ENCODE measurements at regions of chr16 and their contacts with region 1.

Region 1: GRCh38 chr16:85086347-85087291 is 25.7 kb downstream of the CIBAR2 start:
- DNase-seq: peak; percentile 82
- CTCF ChIP-seq: peak; percentile 90

Region 2: GRCh38 chr16:85010931-85011845 is 75.4 kb before region 1 on chr16 and contains the start of gene ZDHHC7:
- CTCF ChIA-PET with region 1: interaction called, 16 read pairs
- POLR2A ChIA-PET with region 1: no interaction called
- DNase-seq: peak; percentile 96
- CTCF ChIP-seq: no peak

Region 3: DNA sequence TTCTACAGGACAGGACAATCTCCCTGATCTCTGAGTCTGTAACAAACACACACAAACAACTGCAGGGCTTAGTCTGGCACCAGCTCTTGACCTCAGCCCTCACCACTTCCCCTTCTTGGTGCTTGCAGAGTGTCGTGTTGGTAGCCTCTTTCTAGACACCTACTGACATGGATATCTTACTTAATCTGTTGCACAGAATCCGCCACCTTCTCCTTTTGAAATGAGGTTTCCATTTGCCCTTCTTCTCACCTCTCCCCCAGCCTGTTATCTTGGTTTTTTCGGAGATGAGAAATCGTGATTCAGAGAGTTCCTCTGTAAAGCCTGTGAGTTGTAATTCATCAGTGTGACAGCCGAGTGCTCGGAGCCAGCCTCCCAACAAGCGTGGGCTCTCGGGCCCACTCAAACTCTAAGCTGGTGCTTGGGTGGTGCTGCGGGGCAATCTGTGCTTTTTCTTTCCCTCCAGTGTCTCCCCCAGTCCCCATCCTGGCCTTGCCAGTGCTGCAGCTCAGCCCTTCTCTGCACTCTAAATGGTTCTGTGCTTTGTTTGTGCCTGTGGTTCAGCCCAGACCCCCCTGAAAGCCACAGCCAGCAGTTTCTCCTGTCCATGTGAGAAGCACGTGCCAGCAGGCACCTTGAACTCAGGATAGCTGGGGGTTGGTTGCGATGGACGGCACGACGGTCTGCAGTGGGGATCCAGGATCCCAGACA is 31.0 kb before region 1 on chr16:
- CTCF ChIA-PET with region 1: interaction called, 51 read pairs
- POLR2A ChIA-PET with region 1: no interaction called
- DNase-seq: peak; percentile 71
- CTCF ChIP-seq: peak; percentile 2

Region 4: DNA sequence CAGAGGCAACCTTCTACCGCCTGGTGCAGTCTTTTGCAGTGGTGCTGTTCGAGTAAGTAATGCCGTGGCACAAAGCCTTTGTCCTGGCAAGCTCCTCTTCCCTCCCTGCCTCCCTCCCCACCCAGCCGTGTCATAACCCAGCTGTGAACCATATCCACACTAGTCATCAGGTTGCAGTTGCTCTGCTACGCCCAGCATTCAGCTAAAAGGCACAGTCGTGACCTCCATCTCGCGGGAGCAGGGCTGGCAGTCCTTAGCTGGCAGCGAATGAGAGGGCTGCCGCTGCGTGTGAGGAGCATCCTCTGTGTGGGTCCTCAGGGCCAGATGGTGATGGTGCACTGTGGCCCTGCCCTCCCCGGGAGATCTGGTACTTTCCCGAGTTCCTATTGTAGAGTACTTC is 13.7 kb before region 1 on chr16:
- CTCF ChIA-PET with region 1: interaction called, 11 read pairs
- POLR2A ChIA-PET with region 1: no interaction called
- DNase-seq: no peak
- CTCF ChIP-seq: no peak

Region 5: DNA sequence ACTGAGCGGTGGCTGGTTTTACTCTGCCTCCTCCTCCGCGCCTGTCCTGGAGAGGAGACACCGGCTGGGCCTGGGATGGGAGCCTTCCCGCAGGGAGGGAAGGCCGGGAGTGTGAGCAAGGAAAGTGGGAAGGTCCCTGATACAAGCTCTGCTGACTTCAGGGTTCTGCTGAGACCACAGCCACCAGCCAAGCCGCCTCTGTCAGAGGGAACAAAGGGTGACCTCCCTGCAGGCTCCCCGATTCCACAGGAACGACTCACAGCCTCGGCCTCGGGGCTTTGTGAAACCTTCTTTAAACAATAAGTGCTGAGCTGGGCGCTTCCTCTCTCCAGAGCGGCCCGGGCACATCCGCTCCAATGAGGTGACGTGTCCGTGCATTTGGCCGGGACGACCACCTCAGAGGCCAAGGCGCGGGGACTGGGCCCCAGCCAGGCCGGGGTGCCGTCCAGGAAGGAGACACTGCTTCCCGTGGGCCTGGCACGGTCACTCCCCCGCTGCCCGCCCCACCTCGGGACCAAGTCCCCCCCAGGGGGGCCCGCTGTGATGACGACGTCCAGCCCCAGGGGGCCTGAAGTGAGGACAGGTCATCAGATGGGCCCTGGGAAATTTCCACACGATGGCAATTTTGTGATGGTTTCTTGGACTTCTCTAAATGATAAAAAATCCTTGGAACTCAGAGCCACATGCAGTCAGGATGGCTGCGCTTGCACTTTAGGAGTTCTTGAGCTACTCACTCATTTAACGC is 37.4 kb after region 1 on chr16:
- CTCF ChIA-PET with region 1: no interaction called
- POLR2A ChIA-PET with region 1: no interaction called
- DNase-seq: no peak
- CTCF ChIP-seq: no peak

Measured in GM10248 (cell line).